ENCODE measurements at regions of chr2 and their contacts with region 1.

Region 1: GRCh38 chr2:11829947-11830707 is 83.7 kb downstream of the LPIN1 start:
- DNase-seq: peak; percentile 61
- H3K4me3 Mint-ChIP-seq: peak overlapping the region; percentile 51
- H3K27ac Mint-ChIP-seq: peak overlapping the region; percentile 56
- H3K4me1 Mint-ChIP-seq: peaks cover 31% of the 10 kb centered on the region
- H3K27me3 Mint-ChIP-seq: peaks cover 37% of the 10 kb centered on the region

Region 2: GRCh38 chr2:11863513-11864328 is 33.6 kb after region 1 on chr2:
- intact Hi-C with region 1: loop called (anchors 5 kb)
- DNase-seq: peak; percentile 47
- H3K4me3 Mint-ChIP-seq: no peak overlapping the region
- H3K27ac Mint-ChIP-seq: no peak overlapping the region
- H3K4me1 Mint-ChIP-seq: peaks cover 9% of the 10 kb centered on the region
- H3K27me3 Mint-ChIP-seq: peaks cover 13% of the 10 kb centered on the region

Region 3: GRCh38 chr2:12416600-12416999 is 586.5 kb after region 1 on chr2:
- intact Hi-C with region 1: loop called (anchors 2 kb)
- DNase-seq: peak; percentile 54
- H3K4me3 Mint-ChIP-seq: no peak overlapping the region
- H3K27ac Mint-ChIP-seq: no peak overlapping the region
- H3K4me1 Mint-ChIP-seq: peaks cover 59% of the 10 kb centered on the region
- H3K27me3 Mint-ChIP-seq: no peaks in the 10 kb centered on the region

Region 4: GRCh38 chr2:12555012-12555645 is 725.0 kb after region 1 on chr2:
- intact Hi-C with region 1: loop called (anchors 2 kb)
- DNase-seq: no peak
- H3K4me3 Mint-ChIP-seq: peak overlapping the region; percentile 14
- H3K27ac Mint-ChIP-seq: peak overlapping the region; percentile 85
- H3K4me1 Mint-ChIP-seq: peaks cover 42% of the 10 kb centered on the region
- H3K27me3 Mint-ChIP-seq: no peaks in the 10 kb centered on the region

Region 5: GRCh38 chr2:12931186-12931844 is 1101.2 kb after region 1 on chr2:
- intact Hi-C with region 1: loop called (anchors 1 kb)
- DNase-seq: no peak
- H3K4me3 Mint-ChIP-seq: no peak overlapping the region
- H3K27ac Mint-ChIP-seq: no peak overlapping the region
- H3K4me1 Mint-ChIP-seq: peaks cover 12% of the 10 kb centered on the region
- H3K27me3 Mint-ChIP-seq: peaks cover 47% of the 10 kb centered on the region

Region 6: GRCh38 chr2:13006829-13007717 is 1176.9 kb after region 1 on chr2:
- intact Hi-C with region 1: loop called (anchors 1 kb)
- DNase-seq: peak; percentile 40
- H3K4me3 Mint-ChIP-seq: no peak overlapping the region
- H3K27ac Mint-ChIP-seq: no peak overlapping the region
- H3K4me1 Mint-ChIP-seq: peaks cover 3% of the 10 kb centered on the region
- H3K27me3 Mint-ChIP-seq: peaks cover 48% of the 10 kb centered on the region

Measured in activated T-helper 2 cell treated with anti-CD3 and anti-CD28 coated beads, Interferon-gamma antibody, Interleukin-2, Interleukin-4, amounts not matched to agents 10 μg/mL and 5 μg/mL and 100 μg/mL, durations not matched to agents 14 hours and 24 hours and 36 hours (primary cell).